Activated T-helper 2 cell treated with anti-CD3 and anti-CD28 coated beads, Interferon-gamma antibody, Interleukin-2, Interleukin-4, amounts not matched to agents 10 μg/mL and 5 μg/mL and 100 μg/mL, durations not matched to agents 14 hours and 24 hours and 36 hours (primary cell): ENCODE measurements at regions of chr11 and their contacts with region 1.

Region 1: DNA sequence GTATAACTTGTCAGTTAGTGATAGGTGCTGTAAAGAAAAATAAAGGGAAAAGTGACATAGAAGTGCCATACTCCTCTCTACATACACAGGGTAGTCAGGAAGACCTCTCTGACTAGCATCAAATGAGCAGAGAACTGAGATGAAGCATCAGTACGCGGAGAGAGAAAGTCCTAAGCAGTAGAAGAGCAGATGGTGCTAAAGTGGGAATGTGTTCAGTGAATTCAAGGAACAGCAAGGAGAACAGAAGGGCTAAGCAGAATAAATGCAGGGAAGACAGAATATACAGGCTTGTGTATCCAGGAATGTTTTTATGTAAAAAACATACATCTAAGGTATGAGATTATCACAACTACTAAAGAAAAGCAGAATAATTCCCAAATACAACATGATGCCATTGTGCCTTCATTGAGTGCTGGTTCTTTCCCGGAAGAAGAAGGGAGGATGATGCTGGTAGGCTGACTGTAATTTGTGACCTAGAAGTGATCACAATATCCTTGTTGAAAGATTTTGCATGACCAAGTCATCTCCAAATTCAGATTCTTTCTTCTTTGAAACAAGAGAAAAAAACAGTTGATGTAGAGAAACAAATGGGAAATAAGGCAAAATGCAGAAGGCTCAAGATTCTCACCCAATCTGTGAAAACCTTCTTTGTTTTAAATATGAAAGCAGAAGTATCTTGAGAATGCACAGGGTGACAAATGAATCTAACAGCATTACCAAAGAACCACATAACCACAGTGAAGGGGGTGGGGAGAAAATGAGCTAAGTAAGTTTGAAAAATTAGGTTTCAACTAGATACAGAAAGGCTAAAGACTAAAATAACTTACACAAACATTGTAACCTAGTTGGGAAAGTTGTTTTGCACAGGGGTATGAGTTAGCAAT is 20.5 kb downstream of the MRE11 start:
- DNase-seq: peak; percentile 10
- H3K4me3 Mint-ChIP-seq: peak overlapping the region; percentile 46
- H3K27ac Mint-ChIP-seq: peak overlapping the region; percentile 82
- H3K4me1 Mint-ChIP-seq: peaks cover 48% of the 10 kb centered on the region
- H3K27me3 Mint-ChIP-seq: no peaks in the 10 kb centered on the region

Region 2: GRCh38 chr11:94424662-94425061 is 48.5 kb before region 1 on chr11:
- intact Hi-C with region 1: loop called (anchors 5 kb)
- DNase-seq: no peak
- H3K4me3 Mint-ChIP-seq: no peak overlapping the region
- H3K27ac Mint-ChIP-seq: no peak overlapping the region
- H3K4me1 Mint-ChIP-seq: no peaks in the 10 kb centered on the region
- H3K27me3 Mint-ChIP-seq: no peaks in the 10 kb centered on the region

Region 3: GRCh38 chr11:94493281-94494125 is 20.3 kb after region 1 on chr11 and contains the starts of genes ANKRD49 and MRE11:
- intact Hi-C with region 1: loop called (anchors 1 kb)
- DNase-seq: peak; percentile 96
- H3K4me3 Mint-ChIP-seq: peak within 1 kb of the TSS; percentile 94
- H3K27ac Mint-ChIP-seq: peak within 1 kb of the TSS; percentile 92
- H3K4me1 Mint-ChIP-seq: peaks cover 23% of the 10 kb centered on the region
- H3K27me3 Mint-ChIP-seq: no peaks in the 10 kb centered on the region
- total RNA-seq, gene ANKRD49: 19.4 and 20.7 TPM in 2 replicates
- total RNA-seq, gene MRE11: 45.8 and 47.4 TPM in 2 replicates

Region 4: DNA sequence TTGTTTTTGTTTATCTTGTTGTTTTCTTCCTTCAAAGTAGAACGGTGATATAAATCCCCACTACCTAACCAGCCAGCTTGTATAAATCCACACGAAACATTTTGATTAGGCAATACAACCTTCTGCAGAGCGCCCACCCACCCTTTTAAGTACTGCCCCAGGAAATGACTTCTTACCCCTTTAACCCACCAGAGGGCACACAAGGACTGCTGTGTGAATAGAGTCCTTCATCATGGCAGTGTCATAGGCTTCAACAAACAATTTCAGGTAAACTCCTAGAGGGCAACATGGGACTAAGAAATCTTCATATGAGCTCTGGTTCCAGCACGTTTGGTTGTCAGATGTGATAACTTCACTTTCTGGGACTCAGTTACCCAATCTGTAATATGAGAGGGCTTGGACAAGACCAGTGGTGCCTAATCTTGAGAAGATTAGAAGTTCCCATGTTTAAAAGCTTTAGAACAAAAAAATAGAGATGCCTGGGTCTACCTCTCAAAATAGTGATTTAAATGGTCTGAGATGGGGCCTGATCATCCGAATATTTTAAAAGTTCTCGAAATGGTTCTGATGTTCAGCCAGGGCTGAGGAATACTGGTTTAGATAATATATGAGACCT is 150.1 kb after region 1 on chr11:
- intact Hi-C with region 1: no loop called
- DNase-seq: peak; percentile 24
- H3K4me3 Mint-ChIP-seq: no peak overlapping the region
- H3K27ac Mint-ChIP-seq: no peak overlapping the region
- H3K4me1 Mint-ChIP-seq: no peaks in the 10 kb centered on the region
- H3K27me3 Mint-ChIP-seq: peaks cover 6% of the 10 kb centered on the region

Region 5: GRCh38 chr11:94638902-94639373 is 165.8 kb after region 1 on chr11:
- intact Hi-C with region 1: no loop called
- DNase-seq: no peak
- H3K4me3 Mint-ChIP-seq: no peak overlapping the region
- H3K27ac Mint-ChIP-seq: no peak overlapping the region
- H3K4me1 Mint-ChIP-seq: peaks cover 4% of the 10 kb centered on the region
- H3K27me3 Mint-ChIP-seq: no peaks in the 10 kb centered on the region